ENCODE measurements at regions of chr1 and their contacts with region 1.

Region 1: DNA sequence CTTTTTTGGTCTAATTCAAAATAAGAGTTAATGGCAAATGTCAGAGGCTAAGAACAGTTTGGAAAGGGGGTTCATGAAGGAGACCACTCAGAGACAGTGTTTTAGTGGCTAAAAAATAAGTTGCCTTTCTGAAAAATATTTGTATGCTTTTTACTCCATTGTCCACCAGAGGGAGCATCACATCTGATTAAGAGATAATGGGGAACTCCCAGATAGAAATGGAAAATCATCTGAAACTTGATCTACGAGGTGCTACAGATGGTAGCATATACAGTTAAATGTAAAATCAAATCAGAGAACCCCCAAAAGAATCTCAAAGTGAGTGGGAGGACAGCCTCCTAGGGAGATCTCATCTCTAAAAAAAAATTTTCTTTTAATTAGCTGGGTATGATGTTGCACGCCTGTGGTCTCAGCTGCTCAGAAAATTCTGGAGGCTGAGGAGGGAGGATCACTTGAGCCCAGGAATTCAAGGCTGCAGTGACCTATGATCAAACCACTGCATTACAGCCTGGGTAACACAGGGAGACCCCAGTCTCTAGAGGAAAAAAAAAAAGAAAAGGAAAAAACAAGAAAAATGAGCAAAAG is 9.7 kb downstream of the SMYD3 start:
- DNase-seq: peak in 2 of 5 donors; percentile 59 to 64
- H3K4me3 ChIP-seq: no peak overlapping the region
- H3K4me3 Mint-ChIP-seq: no peak overlapping the region
- H3K27ac ChIP-seq: no peak overlapping the region
- H3K27ac Mint-ChIP-seq: peak overlapping the region in 3 of 8 donors; percentile 36 to 72 (median 68)
- H3K4me1 ChIP-seq: no peaks in the 10 kb centered on the region
- H3K4me1 Mint-ChIP-seq: peaks cover 16 to 24% (median 20%) of the 10 kb centered on the region in 3 donors
- H3K27me3 ChIP-seq: no peaks in the 10 kb centered on the region
- H3K27me3 Mint-ChIP-seq: no peaks in the 10 kb centered on the region

Region 2: DNA sequence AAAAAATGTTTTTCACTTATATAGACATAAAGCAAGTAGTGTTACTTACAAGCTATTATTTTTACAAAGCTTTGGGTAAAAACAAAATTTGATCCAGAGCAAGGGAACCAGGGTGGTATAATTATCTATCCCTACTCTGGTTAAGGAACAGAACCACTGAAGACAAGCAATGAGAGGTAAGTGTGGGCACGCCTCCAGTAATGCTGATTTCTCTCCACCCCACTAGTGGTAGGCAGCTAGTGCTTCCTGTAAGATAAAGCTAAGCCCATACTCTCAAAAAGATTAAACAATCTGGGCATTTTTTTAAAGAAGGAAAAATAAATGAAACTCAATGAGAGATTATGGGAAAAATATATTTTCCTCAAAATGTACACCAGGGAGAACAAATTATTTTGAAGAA is 46.6 kb after region 1 on chr1:
- CTCF ChIA-PET with region 1: no interaction called
- POLR2A ChIA-PET with region 1: no interaction called
- DNase-seq: no peak
- H3K4me3 ChIP-seq: no peak overlapping the region
- H3K4me3 Mint-ChIP-seq: no peak overlapping the region
- H3K27ac ChIP-seq: no peak overlapping the region
- H3K27ac Mint-ChIP-seq: peak overlapping the region in 1 of 8 donors; percentile 45
- H3K4me1 ChIP-seq: no peaks in the 10 kb centered on the region
- H3K4me1 Mint-ChIP-seq: no peaks in the 10 kb centered on the region
- H3K27me3 ChIP-seq: no peaks in the 10 kb centered on the region
- H3K27me3 Mint-ChIP-seq: peaks cover 0 to 3% of the 10 kb centered on the region in 2 donors

Region 3: GRCh38 chr1:246699095-246699735 is 201.8 kb after region 1 on chr1:
- CTCF ChIA-PET with region 1: interaction called, 11 read pairs
- POLR2A ChIA-PET with region 1: no interaction called
- DNase-seq: peak; percentile 59 to 85 (median 75)
- H3K4me3 ChIP-seq: peak overlapping the region; percentile 19
- H3K4me3 Mint-ChIP-seq: peak overlapping the region in 6 of 7 donors; percentile 72 to 82 (median 78)
- H3K27ac ChIP-seq: no peak overlapping the region
- H3K27ac Mint-ChIP-seq: peak overlapping the region in 6 of 8 donors; percentile 0 to 72 (median 8)
- H3K4me1 ChIP-seq: peaks cover 5% of the 10 kb centered on the region
- H3K4me1 Mint-ChIP-seq: peaks cover 5 to 11% (median 6%) of the 10 kb centered on the region in 3 donors
- H3K27me3 ChIP-seq: no peaks in the 10 kb centered on the region
- H3K27me3 Mint-ChIP-seq: peaks cover 2 to 6% of the 10 kb centered on the region in 2 donors